ENCODE measurements at regions of chr1 and their contacts with region 1.

Region 1: GRCh38 chr1:150688786-150689185 is 8.2 kb downstream of the GOLPH3L start:
- DNase-seq: no peak
- ATAC-seq: no peak
- H3K4me3 ChIP-seq: no peak overlapping the region
- H3K27ac ChIP-seq: no peak overlapping the region
- H3K4me1 ChIP-seq: no peaks in the 10 kb centered on the region
- H3K27me3 ChIP-seq: no peaks in the 10 kb centered on the region
- CTCF ChIP-seq: no peak
- POLR2A ChIP-seq: no peak
- RAD21 ChIP-seq: no peak

Region 2: GRCh38 chr1:150515328-150516048 is 173.3 kb before region 1 on chr1 and contains the start of gene FALEC:
- CTCF ChIA-PET with region 1: no interaction called
- POLR2A ChIA-PET with region 1: no interaction called
- dilution Hi-C with region 1: no loop called
- in situ Hi-C with region 1: no loop called
- intact Hi-C with region 1: no loop called
- DNase-seq: peak; percentile 93
- ATAC-seq: peak; percentile 99
- H3K4me3 ChIP-seq: peak within 1 kb of the TSS; percentile 48
- H3K27ac ChIP-seq: peak within 1 kb of the TSS; percentile 72
- H3K4me1 ChIP-seq: peaks cover 6% of the 10 kb centered on the region
- H3K27me3 ChIP-seq: no peaks in the 10 kb centered on the region
- CTCF ChIP-seq: no peak
- POLR2A ChIP-seq: 0 out of 2 replicates have a peak, but pooled peaks have one; percentile 7
- RAD21 ChIP-seq: no peak
- total RNA-seq, gene FALEC: not detected in 2 replicates

Region 3: DNA sequence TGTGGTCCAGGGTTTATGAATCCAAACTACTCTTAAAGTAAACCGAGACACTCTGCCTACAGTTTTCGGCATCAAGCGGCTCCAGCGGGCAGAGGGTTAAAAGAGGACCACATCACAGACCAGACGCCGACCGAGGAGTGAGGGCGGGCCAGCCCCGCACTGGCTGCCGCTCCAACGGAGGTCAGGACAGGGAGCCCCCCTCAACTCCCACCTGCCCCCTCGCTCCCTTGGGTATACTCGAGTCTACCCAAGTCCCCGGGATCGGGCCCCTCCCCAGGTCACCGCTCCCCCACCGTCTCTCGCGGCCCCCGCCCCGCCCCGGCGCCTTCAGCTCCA is 187.3 kb after region 1 on chr1:
- CTCF ChIA-PET with region 1: no interaction called
- POLR2A ChIA-PET with region 1: interaction called, 13 read pairs
- dilution Hi-C with region 1: no loop called
- in situ Hi-C with region 1: no loop called
- intact Hi-C with region 1: no loop called
- DNase-seq: peak; percentile 49
- ATAC-seq: peak; percentile 64
- H3K4me3 ChIP-seq: peak overlapping the region; percentile 77
- H3K27ac ChIP-seq: peak overlapping the region; percentile 94
- H3K4me1 ChIP-seq: peaks cover 11% of the 10 kb centered on the region
- H3K27me3 ChIP-seq: no peaks in the 10 kb centered on the region
- CTCF ChIP-seq: no peak
- POLR2A ChIP-seq: no peak; the same call in 1 of the 2 replicates
- RAD21 ChIP-seq: peak; percentile 8; the same call in 1 of the 2 replicates

Measured in IMR-90 (cell line).